Mammary epithelial cell (primary cell): ENCODE measurements at regions of chr6 and their contacts with region 1.

Region 1: DNA sequence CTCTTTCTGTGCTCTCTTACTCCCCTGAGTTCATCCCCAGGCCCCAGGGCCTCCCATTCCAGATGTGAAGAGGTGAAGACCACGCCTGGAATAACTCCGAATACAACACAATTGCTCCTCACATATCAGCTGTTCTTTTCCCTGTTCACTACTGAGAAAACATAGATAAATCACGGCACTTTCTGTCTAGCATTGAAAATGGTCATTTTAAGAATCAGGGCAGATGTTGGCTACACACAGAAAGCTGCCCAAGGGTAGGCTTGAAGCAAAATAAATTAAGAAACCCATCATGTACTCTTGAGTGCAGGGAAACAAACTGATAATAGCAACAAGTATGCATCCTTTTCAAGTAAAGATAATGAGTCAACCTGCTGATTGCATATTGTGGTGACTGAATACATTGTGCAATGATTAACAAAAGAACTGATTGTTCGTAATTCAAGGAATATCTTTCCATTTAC is 382.5 kb downstream of the PRKN start:
- DNase-seq: peak; percentile 78
- H3K4me3 ChIP-seq: no peak overlapping the region
- H3K27ac ChIP-seq: peak overlapping the region; percentile 36
- H3K4me1 ChIP-seq: peaks cover 19% of the 10 kb centered on the region
- H3K27me3 ChIP-seq: no peaks in the 10 kb centered on the region
- CTCF ChIP-seq: no peak

Region 2: GRCh38 chr6:163392533-163392932 is 1047.5 kb after region 1 on chr6:
- CTCF ChIA-PET with region 1: no interaction called
- dilution Hi-C with region 1: no loop called
- in situ Hi-C with region 1: no loop called
- intact Hi-C with region 1: loop called (anchors 5 kb)
- DNase-seq: peak; percentile 88
- H3K4me3 ChIP-seq: peak overlapping the region in 2 of 3 experiments; percentile 21 to 29
- H3K27ac ChIP-seq: peak overlapping the region; percentile 87
- H3K4me1 ChIP-seq: peaks cover 16% of the 10 kb centered on the region
- H3K27me3 ChIP-seq: no peaks in the 10 kb centered on the region
- CTCF ChIP-seq: no peak